Cardiac septum (tissue), 1 donor: ENCODE measurements at regions of chr1 and their contacts with region 1.

Region 1: DNA sequence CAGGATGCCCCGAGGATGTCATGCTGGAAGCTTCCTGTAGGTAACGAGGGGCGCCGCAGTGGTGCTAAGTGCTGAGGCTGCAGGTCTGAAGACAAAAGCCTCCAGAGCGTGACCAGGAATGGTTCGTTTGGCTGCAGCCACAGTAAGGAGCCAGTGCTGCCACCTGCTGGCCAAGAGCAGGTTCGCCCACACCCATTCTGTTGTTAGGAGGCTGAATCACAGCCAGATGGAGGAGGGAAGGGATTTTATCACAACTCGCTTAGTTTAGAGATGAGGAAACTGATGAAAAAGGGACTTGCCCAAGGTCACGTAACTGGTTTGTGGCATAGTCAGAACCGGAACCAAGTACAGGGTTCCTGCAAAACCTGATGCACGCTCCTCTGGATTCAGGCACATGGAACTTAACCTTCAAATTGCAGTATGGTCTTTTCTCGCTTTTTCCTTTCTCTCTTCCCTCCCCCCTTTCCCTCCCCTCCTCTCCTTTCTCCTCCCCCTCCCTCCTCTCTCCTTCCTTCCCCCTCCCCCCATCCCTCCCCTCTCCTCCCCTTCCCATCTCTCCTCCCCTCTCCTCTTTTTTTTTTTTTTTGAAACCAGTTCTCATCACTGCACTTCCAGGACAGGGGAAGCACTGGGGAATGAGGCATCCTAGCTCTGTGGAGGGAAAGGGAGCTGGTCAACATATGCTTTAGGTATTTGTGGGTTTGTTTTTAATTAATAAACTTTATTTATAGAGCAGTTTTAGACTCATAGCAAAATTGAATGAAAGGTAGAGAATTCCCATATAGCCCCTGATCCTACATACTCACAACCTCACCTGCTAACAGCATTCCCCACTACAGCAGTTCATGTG is 81.8 kb downstream of the MPZL1 start:
- DNase-seq: peak; percentile 95

Region 2: DNA sequence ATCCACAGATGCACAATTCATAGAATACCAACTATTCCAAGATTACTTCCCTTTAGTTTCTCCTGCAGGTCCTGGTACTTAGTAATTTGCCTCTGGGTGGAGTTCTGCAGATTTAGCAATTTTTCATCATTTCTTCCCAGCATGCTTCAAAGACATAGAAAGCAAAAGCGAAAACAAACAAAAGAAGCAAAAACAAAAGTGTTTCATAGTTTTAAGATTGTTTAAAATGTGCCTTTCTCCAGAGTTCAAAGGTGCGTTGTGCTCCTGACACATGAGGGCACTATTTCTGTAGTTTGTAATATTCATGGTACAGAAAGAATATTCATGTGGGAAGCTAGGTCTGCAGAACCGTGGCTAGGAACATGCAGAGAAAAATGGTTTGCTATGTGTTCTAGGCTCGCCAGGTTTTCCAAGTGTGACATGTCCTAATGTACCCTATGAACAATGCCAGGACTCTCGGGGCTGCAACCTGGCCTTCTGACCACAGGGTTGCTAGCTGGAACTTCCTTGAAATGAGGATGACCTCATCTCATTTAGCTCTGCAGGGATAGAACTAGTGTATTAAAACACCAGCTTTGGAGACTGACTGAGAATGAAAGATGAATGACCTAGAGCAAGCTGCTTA is 203.5 kb before region 1 on chr1:
- intact Hi-C with region 1: loop called (anchors 5 kb)
- DNase-seq: no peak

Region 3: DNA sequence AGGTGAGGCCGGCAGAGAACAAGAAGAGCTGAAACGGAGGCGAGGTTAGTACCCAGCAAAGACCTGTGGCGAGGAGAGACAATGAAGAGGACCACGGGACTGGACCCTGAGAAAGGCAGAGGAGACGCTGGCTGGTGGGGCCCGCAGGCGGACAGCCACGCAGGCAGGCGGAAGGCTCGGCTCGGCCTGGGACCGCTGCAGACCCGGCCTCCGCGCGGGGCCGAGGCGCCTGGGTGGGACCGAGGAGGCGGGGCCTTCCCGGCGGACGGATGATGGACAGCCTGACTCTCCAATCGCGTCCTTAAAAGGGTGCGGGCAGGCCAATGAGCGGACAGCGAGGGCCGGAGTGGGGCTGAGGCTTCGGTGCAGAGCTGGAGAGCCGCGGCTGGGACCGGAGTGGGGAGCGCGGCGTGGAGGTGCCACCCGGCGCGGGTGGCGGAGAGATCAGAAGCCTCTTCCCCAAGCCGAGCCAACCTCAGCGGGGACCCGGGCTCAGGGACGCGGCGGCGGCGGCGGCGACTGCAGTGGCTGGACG is 81.9 kb before region 1 on chr1 and contains the start of gene MPZL1:
- intact Hi-C with region 1: loop called (anchors 2 kb)
- DNase-seq: peak; percentile 99
- total RNA-seq, gene MPZL1: 35.7 TPM

Region 4: DNA sequence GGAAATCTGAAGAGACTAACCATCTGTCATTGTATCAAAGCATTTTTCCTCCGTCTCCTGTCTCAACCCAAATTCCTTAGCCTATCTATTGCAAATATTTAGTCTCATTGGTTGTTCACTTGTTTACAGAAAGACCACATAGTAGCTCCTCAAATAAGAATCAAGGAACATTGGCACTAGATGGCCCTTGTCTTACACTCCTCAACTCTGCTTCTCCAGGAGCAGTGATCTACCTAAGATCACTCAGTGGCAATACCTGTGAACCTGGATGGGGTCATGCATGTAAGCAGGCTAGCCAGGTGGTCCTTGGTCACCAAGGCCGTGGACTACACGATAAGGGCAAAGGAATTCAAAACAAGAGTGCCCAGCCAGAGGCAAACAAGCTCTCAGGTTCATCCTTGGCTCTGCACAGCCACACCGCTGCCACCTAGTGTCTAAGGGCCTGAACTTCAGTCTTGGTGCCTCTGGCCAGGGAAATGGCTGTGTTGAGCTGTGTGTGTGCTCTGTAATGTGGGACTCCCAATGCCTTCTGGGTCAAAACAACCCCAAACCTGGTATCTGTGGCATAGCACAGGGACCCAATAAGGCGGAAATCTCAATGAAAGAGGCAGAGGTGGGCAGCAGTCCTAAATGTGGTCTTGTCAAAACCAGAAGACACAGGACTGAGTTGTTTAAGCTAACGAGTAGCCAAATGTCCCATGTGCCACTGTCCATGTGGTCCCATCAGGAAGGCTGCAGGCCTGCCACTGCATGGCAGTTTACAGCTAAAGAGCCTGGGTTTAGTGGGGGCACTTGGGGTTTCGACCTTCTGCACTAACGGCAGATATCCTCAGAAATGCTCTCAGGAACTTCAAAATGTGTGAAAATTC is 278.7 kb after region 1 on chr1:
- intact Hi-C with region 1: loop called (anchors 10 kb)
- DNase-seq: no peak